Natural killer cell (primary cell): ENCODE measurements at regions of chr1 and their contacts with region 1.

Region 1: DNA sequence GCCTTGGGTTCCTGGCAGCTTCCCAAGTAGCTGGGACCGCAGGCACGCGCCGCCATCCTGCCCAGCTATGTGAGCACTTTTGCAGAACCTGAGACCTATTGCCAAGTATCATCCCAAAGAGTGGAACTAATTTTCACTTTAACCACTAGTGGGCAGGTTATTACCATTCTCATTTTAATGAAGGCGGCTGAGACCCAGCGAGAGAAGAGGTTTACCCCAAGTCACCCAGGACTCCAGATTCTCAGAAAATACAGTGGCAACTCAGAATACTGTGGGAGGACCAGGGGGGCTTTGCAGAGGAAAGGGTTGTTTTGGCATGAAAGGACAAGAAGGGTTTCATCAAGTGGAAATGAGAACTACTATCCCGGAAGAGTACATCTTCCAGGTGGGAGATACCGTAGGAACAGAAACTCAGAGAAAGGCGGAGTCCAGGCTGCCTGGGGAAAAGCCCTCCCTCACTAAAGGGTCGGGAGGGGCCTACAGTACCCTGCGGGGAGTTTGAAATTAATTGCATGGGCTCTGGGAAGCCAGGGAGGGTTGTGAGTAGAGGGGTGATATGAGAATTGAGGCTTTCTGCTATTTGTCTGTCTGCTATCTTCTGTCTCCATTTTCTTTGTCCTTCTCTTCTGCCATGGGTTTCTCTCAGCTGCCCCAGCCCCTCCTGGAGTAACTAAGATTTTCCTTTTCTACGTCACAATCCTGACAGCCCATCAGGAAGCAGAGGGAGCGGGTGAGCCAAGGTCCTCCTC is 7.2 kb upstream of the SEMA4A start:
- DNase-seq: peak in 1 of 2 donors; percentile 82
- ATAC-seq: peak; percentile 52 to 72 (median 56)
- H3K4me3 ChIP-seq: no peak overlapping the region
- H3K4me3 Mint-ChIP-seq: peak overlapping the region; percentile 84
- H3K27ac ChIP-seq: no peak overlapping the region
- H3K27ac Mint-ChIP-seq: peak overlapping the region; percentile 73 to 82
- H3K4me1 ChIP-seq: peaks cover 54% of the 10 kb centered on the region
- H3K4me1 Mint-ChIP-seq: peaks cover 15 to 17% of the 10 kb centered on the region in 2 donors
- H3K27me3 ChIP-seq: no peaks in the 10 kb centered on the region
- H3K27me3 Mint-ChIP-seq: peaks cover 9 to 18% of the 10 kb centered on the region in 2 donors
- CTCF ChIP-seq: peak; percentile 63

Region 2: GRCh38 chr1:156225677-156226014 is 79.5 kb after region 1 on chr1:
- intact Hi-C with region 1: loop called (anchors 1 kb)
- DNase-seq: no peak
- ATAC-seq: no peak
- H3K4me3 ChIP-seq: no peak overlapping the region
- H3K4me3 Mint-ChIP-seq: no peak overlapping the region
- H3K27ac ChIP-seq: no peak overlapping the region
- H3K27ac Mint-ChIP-seq: peak overlapping the region in 1 of 2 donors; percentile 23
- H3K4me1 ChIP-seq: peaks cover 4% of the 10 kb centered on the region
- H3K4me1 Mint-ChIP-seq: peaks cover 0 to 19% of the 10 kb centered on the region in 2 donors
- H3K27me3 ChIP-seq: no peaks in the 10 kb centered on the region
- H3K27me3 Mint-ChIP-seq: no peaks in the 10 kb centered on the region
- CTCF ChIP-seq: peak; percentile 20

Region 3: DNA sequence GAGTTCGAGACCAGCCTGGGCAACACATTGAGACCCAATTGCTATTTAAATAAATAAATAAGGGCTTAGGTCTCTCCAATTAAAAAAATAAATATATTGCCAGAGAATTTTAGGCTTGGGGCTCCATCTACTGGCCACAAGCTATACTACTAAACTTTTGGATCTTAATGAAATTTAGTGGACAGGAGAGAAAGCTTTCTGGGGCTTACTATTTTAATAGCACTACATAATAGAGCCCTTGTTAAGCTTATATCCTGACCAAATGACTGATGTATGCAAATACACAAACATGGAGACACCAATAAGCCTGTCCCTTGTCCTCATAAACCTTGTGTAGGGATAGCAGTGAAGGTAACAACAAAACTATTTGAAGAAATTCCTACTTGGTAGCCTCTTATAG is 173.5 kb after region 1 on chr1:
- intact Hi-C with region 1: loop called (anchors 5 kb)
- DNase-seq: peak in 1 of 2 donors; percentile 56
- ATAC-seq: peak in 1 of 3 donors; percentile 24
- H3K4me3 ChIP-seq: no peak overlapping the region
- H3K4me3 Mint-ChIP-seq: no peak overlapping the region
- H3K27ac ChIP-seq: no peak overlapping the region
- H3K27ac Mint-ChIP-seq: no peak overlapping the region
- H3K4me1 ChIP-seq: no peaks in the 10 kb centered on the region
- H3K4me1 Mint-ChIP-seq: no peaks in the 10 kb centered on the region
- H3K27me3 ChIP-seq: no peaks in the 10 kb centered on the region
- H3K27me3 Mint-ChIP-seq: no peaks in the 10 kb centered on the region
- CTCF ChIP-seq: peak; percentile 58